Caco-2 (cell line): ENCODE measurements at regions of chr7 and their contacts with region 1.

Region 1: DNA sequence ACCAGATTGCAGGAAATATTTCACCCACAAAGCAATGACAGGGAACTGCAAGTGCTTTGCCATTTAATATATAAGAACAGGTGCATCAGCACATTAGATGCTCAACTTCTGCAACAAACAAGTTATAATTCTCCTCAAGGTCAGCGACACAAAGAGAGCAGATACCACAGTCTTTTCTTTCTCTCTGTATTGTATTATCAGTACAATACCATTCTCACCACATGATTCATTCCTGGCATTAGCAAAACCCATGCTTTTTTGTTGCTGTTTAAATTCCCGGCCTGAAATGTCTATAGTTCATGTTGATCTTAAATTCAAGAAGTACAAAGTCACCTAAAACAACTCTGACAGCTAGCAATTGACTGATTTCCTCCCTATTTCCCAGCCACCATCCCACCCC is 111.8 kb upstream of the FEZF1 start:
- DNase-seq: no peak
- H3K4me3 ChIP-seq: no peak overlapping the region
- H3K4me3 Mint-ChIP-seq: no peak overlapping the region
- H3K27ac Mint-ChIP-seq: no peak overlapping the region
- H3K4me1 ChIP-seq: no peaks in the 10 kb centered on the region
- H3K4me1 Mint-ChIP-seq: no peaks in the 10 kb centered on the region
- H3K27me3 ChIP-seq: no peaks in the 10 kb centered on the region
- H3K27me3 Mint-ChIP-seq: no peaks in the 10 kb centered on the region
- CTCF ChIP-seq: no peak

Region 2: DNA sequence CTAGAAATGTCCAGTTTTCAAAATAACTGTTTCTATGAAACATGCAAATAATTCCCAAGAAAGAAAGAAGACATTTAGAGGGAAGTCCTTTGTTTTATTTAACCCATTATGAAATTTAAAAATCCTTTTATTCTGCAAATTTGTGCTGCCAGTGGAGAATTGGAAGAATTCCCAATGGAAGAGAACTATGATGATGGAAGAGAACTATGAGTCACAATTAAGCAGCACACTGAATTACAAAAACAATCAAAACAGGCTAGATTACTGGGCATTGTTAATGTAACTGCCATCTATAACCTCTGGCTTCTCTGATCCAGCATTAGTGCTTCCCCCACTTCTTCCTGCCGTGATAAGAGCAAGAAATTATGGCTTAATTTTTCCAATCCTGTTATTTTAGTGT is 14.4 kb after region 1 on chr7:
- CTCF ChIA-PET with region 1: no interaction called
- POLR2A ChIA-PET with region 1: interaction called, 10 read pairs
- intact Hi-C with region 1: no loop called
- DNase-seq: no peak
- H3K4me3 ChIP-seq: no peak overlapping the region
- H3K4me3 Mint-ChIP-seq: no peak overlapping the region
- H3K27ac Mint-ChIP-seq: no peak overlapping the region
- H3K4me1 ChIP-seq: no peaks in the 10 kb centered on the region
- H3K4me1 Mint-ChIP-seq: no peaks in the 10 kb centered on the region
- H3K27me3 ChIP-seq: no peaks in the 10 kb centered on the region
- H3K27me3 Mint-ChIP-seq: peaks cover 2% of the 10 kb centered on the region
- CTCF ChIP-seq: no peak